ENCODE measurements at regions of chr18 and their contacts with region 1.

Region 1: DNA sequence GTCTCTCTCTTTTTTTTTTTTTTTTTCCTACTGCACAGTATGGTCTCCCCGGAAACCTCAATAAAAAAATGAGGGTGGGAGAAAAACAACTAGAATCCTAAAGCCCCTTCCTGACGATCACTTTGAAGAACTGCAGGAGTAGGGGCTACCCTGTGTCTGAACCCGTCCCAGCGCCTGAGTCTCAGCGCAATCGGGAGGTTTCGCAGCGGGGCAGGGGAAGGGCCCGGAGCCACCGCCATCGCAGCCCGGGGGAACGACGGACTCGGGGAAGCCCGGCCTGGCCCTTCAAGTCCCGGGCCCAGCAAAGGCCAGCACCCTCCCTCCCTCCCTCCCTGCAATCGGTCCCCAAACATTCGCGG is 411 bp downstream of the NARS1 start:
- DNase-seq: peak in 1 of 9 experiments; percentile 3
- ATAC-seq: peak; percentile 11
- H3K4me3 ChIP-seq: peak overlapping the region; percentile 94 to 96
- H3K4me3 Mint-ChIP-seq: peak overlapping the region; percentile 99
- H3K27ac ChIP-seq: peak overlapping the region; percentile 89 to 93
- H3K27ac Mint-ChIP-seq: peak overlapping the region; percentile 97
- H3K4me1 ChIP-seq: peaks cover 12% of the 10 kb centered on the region
- H3K4me1 Mint-ChIP-seq: peaks cover 37% of the 10 kb centered on the region
- H3K27me3 ChIP-seq: no peaks in the 10 kb centered on the region
- H3K27me3 Mint-ChIP-seq: no peaks in the 10 kb centered on the region
- CTCF ChIP-seq: no peak

Region 2: GRCh38 chr18:56638271-56639093 is 982.7 kb before region 1 on chr18 and contains the start of gene TXNL1:
- CTCF ChIA-PET with region 1: no interaction called
- POLR2A ChIA-PET with region 1: no interaction called
- intact Hi-C with region 1: loop called (anchors 2 to 5 kb)
- DNase-seq: peak; percentile 97 to 100 (median 99)
- ATAC-seq: peak; percentile 97
- H3K4me3 ChIP-seq: peak within 1 kb of the TSS; percentile 55 to 74
- H3K4me3 Mint-ChIP-seq: peak within 1 kb of the TSS; percentile 98
- H3K27ac ChIP-seq: peak within 1 kb of the TSS; percentile 85
- H3K27ac Mint-ChIP-seq: peak within 1 kb of the TSS; percentile 99
- H3K4me1 ChIP-seq: peaks cover 35% of the 10 kb centered on the region
- H3K4me1 Mint-ChIP-seq: peaks cover 51% of the 10 kb centered on the region
- H3K27me3 ChIP-seq: no peaks in the 10 kb centered on the region
- H3K27me3 Mint-ChIP-seq: no peaks in the 10 kb centered on the region
- CTCF ChIP-seq: no peak
- total RNA-seq, gene TXNL1: 43.3 to 44.8 TPM

Region 3: GRCh38 chr18:57242289-57242688 is 378.9 kb before region 1 on chr18:
- CTCF ChIA-PET with region 1: no interaction called
- POLR2A ChIA-PET with region 1: no interaction called
- intact Hi-C with region 1: no loop called
- DNase-seq: no peak
- ATAC-seq: no peak
- H3K4me3 ChIP-seq: no peak overlapping the region
- H3K4me3 Mint-ChIP-seq: no peak overlapping the region
- H3K27ac ChIP-seq: no peak overlapping the region
- H3K27ac Mint-ChIP-seq: no peak overlapping the region
- H3K4me1 ChIP-seq: no peaks in the 10 kb centered on the region
- H3K4me1 Mint-ChIP-seq: no peaks in the 10 kb centered on the region
- H3K27me3 ChIP-seq: no peaks in the 10 kb centered on the region
- H3K27me3 Mint-ChIP-seq: no peaks in the 10 kb centered on the region
- CTCF ChIP-seq: no peak

Region 4: GRCh38 chr18:57586251-57587049 is 34.8 kb before region 1 on chr18 and contains the start of gene FECH:
- CTCF ChIA-PET with region 1: no interaction called
- POLR2A ChIA-PET with region 1: interaction called, 5 read pairs
- intact Hi-C with region 1: loop called (anchors 1 to 2 kb)
- DNase-seq: peak; percentile 34 to 82 (median 66)
- ATAC-seq: peak; percentile 97
- H3K4me3 ChIP-seq: peak within 1 kb of the TSS; percentile 73 to 87
- H3K4me3 Mint-ChIP-seq: peak within 1 kb of the TSS; percentile 88
- H3K27ac ChIP-seq: peak within 1 kb of the TSS; percentile 29 to 66
- H3K27ac Mint-ChIP-seq: peak within 1 kb of the TSS; percentile 85
- H3K4me1 ChIP-seq: peaks cover 23% of the 10 kb centered on the region
- H3K4me1 Mint-ChIP-seq: peaks cover 26% of the 10 kb centered on the region
- H3K27me3 ChIP-seq: no peaks in the 10 kb centered on the region
- H3K27me3 Mint-ChIP-seq: no peaks in the 10 kb centered on the region
- CTCF ChIP-seq: no peak
- total RNA-seq, gene FECH: 10.6 to 11.3 TPM

Region 5: GRCh38 chr18:59139371-59140298 is 1518.4 kb after region 1 on chr18 and contains the start of gene SEC11C:
- CTCF ChIA-PET with region 1: no interaction called
- POLR2A ChIA-PET with region 1: no interaction called
- intact Hi-C with region 1: loop called in 1 of 2 experiments (anchors 5 kb)
- DNase-seq: peak; percentile 91 to 98 (median 96)
- ATAC-seq: peak; percentile 90
- H3K4me3 ChIP-seq: peak within 1 kb of the TSS; percentile 92 to 99
- H3K4me3 Mint-ChIP-seq: peak within 1 kb of the TSS; percentile 94
- H3K27ac ChIP-seq: peak within 1 kb of the TSS; percentile 98 to 100
- H3K27ac Mint-ChIP-seq: peak within 1 kb of the TSS; percentile 100
- H3K4me1 ChIP-seq: peaks cover 19% of the 10 kb centered on the region
- H3K4me1 Mint-ChIP-seq: peaks cover 42% of the 10 kb centered on the region
- H3K27me3 ChIP-seq: no peaks in the 10 kb centered on the region
- H3K27me3 Mint-ChIP-seq: peaks cover 9% of the 10 kb centered on the region
- CTCF ChIP-seq: no peak
- total RNA-seq, gene SEC11C: 33.8 to 38.5 TPM

Region 6: GRCh38 chr18:59358712-59359575 is 1737.7 kb after region 1 on chr18 and contains the start of gene LMAN1:
- CTCF ChIA-PET with region 1: no interaction called
- POLR2A ChIA-PET with region 1: no interaction called
- intact Hi-C with region 1: loop called (anchors 2 to 10 kb)
- DNase-seq: peak; percentile 77 to 96 (median 92)
- ATAC-seq: peak; percentile 92
- H3K4me3 ChIP-seq: peak within 1 kb of the TSS; percentile 67 to 97
- H3K4me3 Mint-ChIP-seq: peak within 1 kb of the TSS; percentile 97
- H3K27ac ChIP-seq: peak within 1 kb of the TSS; percentile 51 to 86
- H3K27ac Mint-ChIP-seq: peak within 1 kb of the TSS; percentile 92
- H3K4me1 ChIP-seq: peaks cover 21% of the 10 kb centered on the region
- H3K4me1 Mint-ChIP-seq: peaks cover 39% of the 10 kb centered on the region
- H3K27me3 ChIP-seq: no peaks in the 10 kb centered on the region
- H3K27me3 Mint-ChIP-seq: no peaks in the 10 kb centered on the region
- CTCF ChIP-seq: no peak
- total RNA-seq, gene LMAN1: 39.6 to 44.6 TPM